Tibial artery (tissue), 4 donors: ENCODE measurements at regions of chr1 and their contacts with region 1.

Region 1: DNA sequence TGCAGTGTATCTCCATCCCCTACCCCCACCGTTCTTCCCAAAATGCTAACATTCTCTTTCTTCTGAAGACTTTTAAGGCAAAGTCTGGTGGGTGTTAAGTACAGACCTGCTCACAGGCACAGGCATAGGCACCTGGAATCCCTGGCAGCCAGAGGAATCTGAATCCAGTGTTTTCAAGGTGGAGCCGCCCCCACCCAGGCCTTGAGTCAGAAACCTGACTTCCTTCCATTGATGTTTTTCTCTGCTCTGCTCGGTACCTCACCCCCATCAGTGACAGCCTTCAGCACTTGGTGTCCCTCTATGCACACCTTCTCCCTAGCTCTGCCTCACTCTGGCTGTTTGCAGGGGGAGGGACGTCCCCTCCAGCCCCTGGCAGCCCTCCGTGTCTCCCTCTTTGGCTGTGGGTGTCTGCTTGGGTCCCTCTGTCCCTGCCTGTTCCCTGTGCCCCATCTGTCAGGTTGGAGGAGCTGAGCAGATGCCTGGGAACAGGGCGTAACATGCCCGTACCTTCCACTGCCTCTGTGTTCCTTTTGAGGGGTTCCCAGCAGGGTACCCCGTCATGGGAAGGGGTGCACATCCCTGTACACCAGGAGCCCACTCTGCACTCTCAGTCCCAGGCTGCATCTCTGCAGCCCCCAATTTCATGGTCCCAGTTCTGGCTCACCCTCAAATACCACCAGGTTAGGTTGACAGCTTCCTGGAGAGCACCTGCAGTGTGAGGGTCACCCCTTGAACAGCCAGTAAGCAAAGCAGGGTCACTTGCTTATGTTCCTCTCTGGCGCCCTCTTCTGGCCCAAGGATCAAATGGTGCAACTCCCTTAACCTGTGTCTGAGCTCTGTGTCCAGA is 6.7 kb downstream of the NCDN start:
- DNase-seq: peak; percentile 83
- H3K4me3 ChIP-seq: no peak overlapping the region
- H3K27ac ChIP-seq: no peak overlapping the region
- H3K4me1 ChIP-seq: peaks cover 3 to 29% (median 15%) of the 10 kb centered on the region in 4 donors
- H3K27me3 ChIP-seq: peaks cover 0 to 10% of the 10 kb centered on the region in 2 donors
- CTCF ChIP-seq: peak; percentile 63 to 71

Region 2: DNA sequence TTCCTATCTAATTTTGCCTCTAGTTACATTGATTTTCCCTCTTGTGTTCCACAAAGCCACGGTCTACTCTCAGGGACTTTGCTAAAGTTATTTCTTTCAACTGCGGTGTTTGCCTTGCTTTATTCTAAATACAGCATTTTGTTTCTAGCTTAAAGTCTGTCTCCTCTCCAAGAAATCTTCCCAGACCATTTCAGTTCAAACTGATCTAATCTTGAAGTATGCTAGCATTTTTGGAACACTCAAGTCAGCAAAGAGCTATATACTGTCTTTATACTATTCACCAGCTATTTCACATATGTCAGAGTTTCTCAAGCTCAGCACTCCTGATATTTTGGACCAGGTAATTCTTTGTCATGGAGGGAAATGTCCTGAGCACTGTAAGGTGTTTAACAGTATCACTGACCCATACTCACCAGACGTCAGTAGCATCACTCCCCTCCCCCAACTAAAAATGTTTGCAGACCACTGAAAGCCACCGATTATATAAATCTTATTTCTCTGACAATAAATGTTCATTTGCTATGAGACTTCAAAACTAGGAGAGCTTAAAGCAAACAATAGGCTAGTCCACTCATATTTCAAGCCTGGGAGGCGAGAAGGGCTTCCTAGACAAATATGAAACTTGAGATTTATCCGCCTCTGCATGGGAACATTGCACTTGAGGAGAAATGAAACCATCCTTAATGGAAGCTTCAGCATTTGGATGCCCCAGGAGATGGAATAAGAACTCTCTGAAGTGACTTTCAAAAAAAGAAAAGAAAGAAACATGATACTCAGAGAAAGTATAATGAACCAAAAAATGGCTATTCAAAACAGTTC is 88.2 kb before region 1 on chr1:
- intact Hi-C with region 1: no loop called
- DNase-seq: no peak
- H3K4me3 ChIP-seq: no peak overlapping the region
- H3K27ac ChIP-seq: no peak overlapping the region
- H3K4me1 ChIP-seq: no peaks in the 10 kb centered on the region
- H3K27me3 ChIP-seq: no peaks in the 10 kb centered on the region
- CTCF ChIP-seq: no peak

Region 3: GRCh38 chr1:35592991-35593694 is 28.9 kb after region 1 on chr1:
- intact Hi-C with region 1: no loop called
- DNase-seq: no peak
- H3K4me3 ChIP-seq: no peak overlapping the region
- H3K27ac ChIP-seq: no peak overlapping the region
- H3K4me1 ChIP-seq: no peaks in the 10 kb centered on the region
- H3K27me3 ChIP-seq: no peaks in the 10 kb centered on the region
- CTCF ChIP-seq: no peak

Region 4: DNA sequence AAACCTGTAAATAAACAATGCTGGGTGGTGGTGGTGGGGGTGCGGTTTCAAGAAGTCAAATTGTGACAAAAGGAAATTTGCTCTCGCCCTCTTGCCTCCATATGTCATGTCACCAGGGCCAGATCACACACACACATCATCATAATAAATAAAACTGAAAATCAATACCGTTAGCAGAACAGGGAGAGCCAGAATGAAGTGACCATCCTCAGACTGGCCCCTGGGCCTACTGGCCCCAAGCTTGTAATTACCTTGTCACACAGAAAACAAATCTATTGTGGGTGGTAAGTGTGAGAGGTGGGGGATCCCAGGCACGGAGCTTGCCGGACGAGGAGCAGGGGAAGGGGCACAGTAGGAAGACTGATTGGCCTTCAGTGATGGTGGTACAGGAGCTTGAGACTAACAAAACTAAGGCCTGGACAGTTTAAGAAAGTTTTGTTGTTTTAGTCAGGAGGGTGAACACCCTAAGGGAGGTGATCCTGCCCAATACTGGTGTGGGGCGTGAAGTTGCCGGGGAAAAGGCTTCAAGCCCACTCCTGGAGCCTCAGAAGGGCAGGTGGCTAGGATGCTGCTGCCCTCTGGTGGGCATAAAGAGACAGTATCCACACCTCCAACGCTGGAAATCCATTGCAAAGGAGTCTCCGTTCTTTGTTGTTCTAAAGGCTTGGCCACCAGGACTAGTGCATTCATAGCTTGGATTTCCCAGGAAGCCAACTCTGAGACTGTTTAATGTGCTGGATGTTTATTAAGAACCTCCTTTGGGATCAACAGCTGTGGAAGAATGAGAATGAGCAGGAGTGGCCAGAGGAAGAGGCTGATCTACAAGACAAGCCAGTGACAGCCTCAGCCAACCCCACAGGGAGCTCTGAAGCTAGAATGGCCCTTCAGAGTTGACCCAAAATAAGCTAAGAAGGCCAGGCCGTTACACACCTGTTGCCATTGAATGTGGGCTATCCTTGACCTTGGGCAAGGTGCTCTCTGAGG is 162.5 kb after region 1 on chr1:
- intact Hi-C with region 1: loop called (anchors 5 kb)
- DNase-seq: peak in 1 of 2 donors; percentile 37
- H3K4me3 ChIP-seq: no peak overlapping the region
- H3K27ac ChIP-seq: no peak overlapping the region
- H3K4me1 ChIP-seq: no peaks in the 10 kb centered on the region
- H3K27me3 ChIP-seq: no peaks in the 10 kb centered on the region
- CTCF ChIP-seq: peak; percentile 70 to 88

Region 5: GRCh38 chr1:35769759-35770446 is 205.6 kb after region 1 on chr1 and contains the start of gene CLSPN:
- intact Hi-C with region 1: loop called (anchors 5 kb)
- DNase-seq: peak; percentile 94 to 96
- H3K4me3 ChIP-seq: peak within 1 kb of the TSS; percentile 74 to 90
- H3K27ac ChIP-seq: peak within 1 kb of the TSS; percentile 56 to 72
- H3K4me1 ChIP-seq: no peaks in the 10 kb centered on the region
- H3K27me3 ChIP-seq: no peaks in the 10 kb centered on the region
- CTCF ChIP-seq: no peak

Region 6: DNA sequence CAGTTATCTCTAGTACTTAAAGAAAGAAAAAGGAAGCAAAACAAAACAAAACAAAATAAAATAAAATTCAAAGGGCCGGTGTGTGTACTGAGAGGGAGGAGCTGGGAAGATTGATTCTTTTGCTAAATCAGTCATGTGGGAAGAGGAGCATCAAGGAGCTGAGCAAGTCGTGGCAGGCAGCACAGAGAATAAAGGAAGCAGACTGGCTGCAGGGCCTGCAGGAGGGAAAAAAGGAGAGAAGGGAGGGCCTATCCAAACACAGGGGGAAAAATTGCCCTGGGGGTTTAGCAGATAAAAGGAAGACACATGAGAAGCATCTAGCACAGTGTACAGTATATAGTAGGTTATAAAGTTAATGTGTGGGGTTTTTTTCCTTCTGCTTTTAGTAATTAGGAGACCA is 271.1 kb after region 1 on chr1:
- intact Hi-C with region 1: no loop called
- DNase-seq: no peak
- H3K4me3 ChIP-seq: no peak overlapping the region
- H3K27ac ChIP-seq: no peak overlapping the region
- H3K4me1 ChIP-seq: no peaks in the 10 kb centered on the region
- H3K27me3 ChIP-seq: no peaks in the 10 kb centered on the region
- CTCF ChIP-seq: no peak